ENCODE measurements at regions of chr7 and their contacts with region 1.

Region 1: DNA sequence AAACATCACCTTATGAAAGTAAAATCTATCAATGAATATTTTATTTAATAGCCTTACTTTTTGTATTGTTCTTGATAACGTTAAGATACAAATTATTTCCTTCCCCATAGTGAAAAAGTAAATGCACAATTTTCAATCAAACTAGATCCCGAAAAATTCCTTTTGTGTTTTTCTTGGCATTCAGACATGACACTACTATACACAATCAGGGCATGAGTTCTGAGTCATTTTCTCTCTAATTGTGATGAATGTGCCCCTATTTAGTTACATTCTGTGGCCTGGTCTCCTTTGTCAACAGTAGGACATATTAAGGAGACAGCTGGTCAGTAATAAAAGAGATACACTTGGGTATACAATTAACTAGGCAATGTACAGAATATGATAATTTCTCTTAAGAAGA is 19.8 kb downstream of the COL1A2 start:
- DNase-seq: no peak
- H3K4me3 ChIP-seq: no peak overlapping the region
- H3K27ac ChIP-seq: peak overlapping the region in 1 of 2 donors; percentile 27
- H3K4me1 ChIP-seq: peaks cover 11% of the 10 kb centered on the region
- H3K27me3 ChIP-seq: no peaks in the 10 kb centered on the region
- CTCF ChIP-seq: no peak
- EP300 ChIP-seq: no peak
- POLR2A ChIP-seq: no peak

Region 2: DNA sequence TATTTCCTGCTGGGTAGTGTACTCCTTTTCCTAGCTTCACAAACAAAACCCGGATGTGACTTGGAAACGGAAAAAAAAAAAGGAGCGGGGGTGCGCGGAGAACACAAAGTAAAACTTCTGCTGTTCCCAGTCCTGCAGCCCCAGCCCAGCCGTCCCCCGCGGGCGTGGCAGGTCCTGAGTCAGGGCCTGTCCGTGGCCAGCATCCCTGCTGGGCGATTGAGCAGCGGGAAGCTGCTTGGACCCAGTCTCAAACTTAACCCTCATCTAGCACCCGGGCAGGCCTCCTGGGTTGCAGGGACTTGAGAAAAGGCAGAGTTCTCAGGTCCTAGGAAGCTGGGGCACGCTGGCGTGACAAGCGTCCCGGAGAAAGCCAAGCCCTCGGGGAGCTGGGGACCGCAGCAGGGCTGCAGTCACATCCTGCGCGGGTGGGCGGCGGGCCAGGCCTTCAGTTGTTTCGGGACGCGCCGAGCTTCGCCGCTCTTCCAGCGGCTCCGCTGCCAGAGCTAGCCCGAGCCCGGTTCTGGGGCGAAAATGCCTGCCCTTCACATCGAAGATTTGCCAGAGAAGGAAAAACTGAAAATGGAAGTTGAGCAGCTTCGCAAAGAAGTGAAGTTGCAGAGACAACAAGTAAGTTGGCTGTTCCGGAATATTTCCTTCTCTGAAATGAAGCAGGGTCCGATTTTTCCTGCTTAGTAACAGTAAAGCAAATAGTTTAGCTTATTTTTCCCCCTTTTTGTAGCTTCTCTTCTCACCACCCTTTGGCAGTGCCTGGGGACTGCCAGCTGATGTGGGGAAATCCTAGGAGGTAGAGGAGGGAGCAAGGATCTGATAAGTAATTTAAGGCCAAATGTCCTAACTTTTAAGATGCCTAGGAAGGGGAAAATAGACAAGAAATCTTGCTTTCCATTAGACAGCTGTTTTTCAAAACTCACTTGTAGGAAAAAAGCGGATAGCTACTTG is 492.6 kb before region 1 on chr7 and contains the start of gene GNG11:
- intact Hi-C with region 1: loop called in 1 of 4 experiments (anchors 5 kb)
- DNase-seq: peak; percentile 82 to 88 (median 84)
- H3K4me3 ChIP-seq: peak within 1 kb of the TSS; percentile 80
- H3K27ac ChIP-seq: peak within 1 kb of the TSS; percentile 86 to 91
- H3K4me1 ChIP-seq: peaks cover 3% of the 10 kb centered on the region
- H3K27me3 ChIP-seq: no peaks in the 10 kb centered on the region
- CTCF ChIP-seq: no peak
- EP300 ChIP-seq: no peak
- POLR2A ChIP-seq: no peak
- total RNA-seq, gene GNG11: 34.8 to 70.7 (median 46.3) TPM